Mucosa of descending colon (tissue), 3 donors: ENCODE measurements at regions of chr6 and their contacts with region 1.

Region 1: DNA sequence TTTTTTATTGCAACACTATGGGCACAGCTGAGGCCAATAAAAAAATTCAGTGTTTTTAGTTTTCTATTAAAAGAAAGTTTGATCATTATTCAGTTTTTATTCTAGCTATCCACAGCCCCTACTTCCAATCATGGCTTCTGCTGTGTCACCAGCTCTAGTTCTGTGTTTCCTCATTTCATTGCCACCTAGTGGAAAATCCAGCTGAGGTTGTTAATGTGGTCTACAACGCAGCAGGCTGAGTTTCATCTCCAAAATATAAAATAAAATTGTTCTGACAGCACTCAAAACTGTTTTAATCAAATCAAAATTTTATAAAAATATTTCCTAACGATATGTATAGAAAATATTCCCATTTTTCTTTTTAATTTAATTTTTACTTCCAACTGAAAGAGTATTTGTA is 13.6 kb downstream of the COL9A1 start:
- DNase-seq: no peak
- ATAC-seq: no peak
- H3K4me3 ChIP-seq: no peak overlapping the region
- H3K4me1 ChIP-seq: no peaks in the 10 kb centered on the region
- CTCF ChIP-seq: no peak

Region 2: GRCh38 chr6:70221025-70221714 is 68.1 kb before region 1 on chr6:
- intact Hi-C with region 1: loop called in 1 of 2 experiments (anchors 5 kb)
- DNase-seq: peak in 1 of 3 donors; percentile 23
- ATAC-seq: peak; percentile 83
- H3K4me3 ChIP-seq: no peak overlapping the region
- H3K4me1 ChIP-seq: peaks cover 16% of the 10 kb centered on the region
- CTCF ChIP-seq: peak; percentile 51

Region 3: GRCh38 chr6:70241991-70242420 is 47.3 kb before region 1 on chr6:
- intact Hi-C with region 1: no loop called
- DNase-seq: peak; percentile 66 to 80 (median 68)
- ATAC-seq: peak; percentile 95
- H3K4me3 ChIP-seq: no peak overlapping the region
- H3K4me1 ChIP-seq: peaks cover 8% of the 10 kb centered on the region
- CTCF ChIP-seq: no peak